ENCODE measurements at regions of chr11 and their contacts with region 1.

Region 1: GRCh38 chr11:117946842-117947526 is 17.8 kb upstream of the TMPRSS13 start:
- DNase-seq: peak; percentile 91
- H3K4me3 Mint-ChIP-seq: no peak overlapping the region
- H3K27ac Mint-ChIP-seq: no peak overlapping the region
- H3K4me1 Mint-ChIP-seq: peaks cover 68% of the 10 kb centered on the region
- H3K27me3 Mint-ChIP-seq: no peaks in the 10 kb centered on the region

Region 2: DNA sequence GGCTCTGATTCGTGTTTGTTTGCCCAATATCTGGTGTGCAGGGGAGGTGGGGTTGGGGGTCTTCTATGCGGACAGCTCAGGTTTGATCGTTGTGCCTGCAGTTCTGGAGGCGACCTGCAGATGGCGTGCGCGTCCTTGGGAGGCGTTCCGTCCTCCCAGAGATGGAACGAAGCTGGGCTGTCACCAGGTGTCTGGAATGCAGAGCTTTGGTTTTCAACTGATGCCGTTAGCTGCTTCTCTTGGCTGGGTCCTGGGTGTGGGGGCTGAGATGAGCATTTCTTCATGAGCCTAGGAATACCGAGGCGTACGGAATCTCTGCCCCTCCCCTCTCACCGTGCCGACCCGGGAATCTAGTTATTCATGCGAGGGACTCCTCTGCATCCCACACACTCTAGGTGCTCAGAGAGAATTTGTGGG is 520.7 kb before region 1 on chr11:
- CTCF ChIA-PET with region 1: interaction called, 7 read pairs
- intact Hi-C with region 1: loop called (anchors 5 kb)
- DNase-seq: peak; percentile 84
- H3K4me3 Mint-ChIP-seq: no peak overlapping the region
- H3K27ac Mint-ChIP-seq: no peak overlapping the region
- H3K4me1 Mint-ChIP-seq: no peaks in the 10 kb centered on the region
- H3K27me3 Mint-ChIP-seq: peaks cover 4% of the 10 kb centered on the region

Region 3: GRCh38 chr11:117828611-117829368 is 118.2 kb before region 1 on chr11:
- CTCF ChIA-PET with region 1: interaction called, 69 read pairs
- intact Hi-C with region 1: loop called (anchors 1 kb)
- DNase-seq: peak; percentile 92
- H3K4me3 Mint-ChIP-seq: no peak overlapping the region
- H3K27ac Mint-ChIP-seq: peak overlapping the region; percentile 46
- H3K4me1 Mint-ChIP-seq: peaks cover 50% of the 10 kb centered on the region
- H3K27me3 Mint-ChIP-seq: no peaks in the 10 kb centered on the region

Region 4: DNA sequence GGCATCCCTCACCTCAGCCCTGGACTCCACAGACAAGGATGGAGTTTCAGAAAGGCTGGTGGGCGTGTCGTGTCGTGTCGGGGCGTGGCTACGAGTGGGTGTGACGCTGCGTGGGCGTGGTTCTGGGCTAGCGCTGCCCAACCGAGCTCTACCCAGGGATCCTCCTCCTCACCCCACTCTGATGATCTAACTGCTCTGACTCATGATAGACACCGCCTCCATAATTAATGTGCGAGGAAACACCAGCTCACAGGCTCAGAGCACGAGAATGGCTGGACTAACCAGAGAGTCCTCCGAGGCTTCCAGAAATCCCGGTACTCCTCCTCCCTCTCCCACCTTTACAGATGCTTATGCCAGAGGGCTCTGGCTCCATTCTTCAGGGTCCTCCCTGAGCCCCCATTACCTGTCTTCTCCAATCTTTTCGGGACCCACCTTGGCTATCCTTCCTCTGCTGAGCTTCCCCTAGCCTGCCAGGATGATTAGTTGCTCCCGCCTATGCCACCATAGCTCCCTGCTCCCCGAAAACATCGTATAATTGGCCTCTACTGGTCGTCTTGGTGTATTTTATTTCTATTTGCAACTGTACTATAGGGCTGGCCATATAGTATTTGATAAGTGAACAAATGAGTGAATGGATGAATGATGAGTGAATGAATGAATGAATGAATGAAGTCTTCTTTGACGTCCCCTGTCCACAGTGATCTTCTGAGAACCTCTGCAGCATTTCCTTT is 39.6 kb before region 1 on chr11:
- CTCF ChIA-PET with region 1: interaction called, 11 read pairs
- intact Hi-C with region 1: loop called (anchors 2 kb)
- DNase-seq: peak; percentile 79
- H3K4me3 Mint-ChIP-seq: peak overlapping the region; percentile 57
- H3K27ac Mint-ChIP-seq: no peak overlapping the region
- H3K4me1 Mint-ChIP-seq: peaks cover 8% of the 10 kb centered on the region
- H3K27me3 Mint-ChIP-seq: no peaks in the 10 kb centered on the region

Region 5: DNA sequence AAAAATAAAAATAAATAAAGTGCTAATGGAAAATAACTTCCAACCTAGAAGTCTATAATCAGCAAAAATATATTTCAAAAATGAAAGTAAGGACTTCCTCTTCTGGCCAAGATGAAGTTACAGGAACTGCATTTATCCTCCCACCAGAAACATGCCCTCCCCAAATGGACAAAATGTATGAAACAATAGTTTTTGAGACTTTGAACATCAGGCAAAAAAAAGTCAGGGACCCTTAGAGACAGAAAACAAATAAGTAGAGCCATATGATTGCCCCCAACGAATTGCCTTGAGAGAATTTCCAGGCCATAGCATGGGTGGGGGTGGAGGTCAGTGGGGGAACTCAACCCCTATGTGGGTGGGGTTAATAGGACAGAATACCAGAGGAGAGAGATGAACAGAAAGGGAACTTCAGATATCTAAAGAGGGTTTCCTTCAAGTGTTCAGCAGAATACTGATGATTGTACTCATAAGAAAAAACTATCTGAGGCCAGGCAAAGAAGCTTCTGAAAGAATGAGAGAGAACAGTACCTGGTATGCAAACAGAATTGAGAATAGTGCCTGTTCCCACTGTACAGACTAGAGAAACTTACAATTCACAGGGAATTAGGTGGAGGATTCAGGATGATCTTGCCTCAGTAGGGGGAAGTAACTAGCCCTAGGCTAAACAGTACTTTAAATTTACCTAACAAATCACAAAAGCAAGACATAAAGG is 12.6 kb after region 1 on chr11:
- CTCF ChIA-PET with region 1: interaction called, 13 read pairs
- intact Hi-C with region 1: no loop called
- DNase-seq: no peak
- H3K4me3 Mint-ChIP-seq: no peak overlapping the region
- H3K27ac Mint-ChIP-seq: no peak overlapping the region
- H3K4me1 Mint-ChIP-seq: peaks cover 26% of the 10 kb centered on the region
- H3K27me3 Mint-ChIP-seq: no peaks in the 10 kb centered on the region

Region 6: GRCh38 chr11:117985953-117986887 is 39.2 kb after region 1 on chr11 and contains the start of gene IL10RA:
- CTCF ChIA-PET with region 1: interaction called, 32 read pairs
- intact Hi-C with region 1: loop called (anchors 1 kb)
- DNase-seq: peak; percentile 81
- H3K4me3 Mint-ChIP-seq: peak within 1 kb of the TSS; percentile 84
- H3K27ac Mint-ChIP-seq: peak within 1 kb of the TSS; percentile 88
- H3K4me1 Mint-ChIP-seq: peaks cover 63% of the 10 kb centered on the region
- H3K27me3 Mint-ChIP-seq: no peaks in the 10 kb centered on the region
- total RNA-seq, gene IL10RA: 11.3 to 16.1 TPM

Region 7: GRCh38 chr11:118051611-118052461 is 104.9 kb after region 1 on chr11:
- CTCF ChIA-PET with region 1: interaction called, 230 read pairs
- intact Hi-C with region 1: loop called (anchors 1 kb)
- DNase-seq: peak; percentile 84
- H3K4me3 Mint-ChIP-seq: no peak overlapping the region
- H3K27ac Mint-ChIP-seq: peak overlapping the region; percentile 61
- H3K4me1 Mint-ChIP-seq: peaks cover 52% of the 10 kb centered on the region
- H3K27me3 Mint-ChIP-seq: no peaks in the 10 kb centered on the region

Measured in activated naive CD4-positive, alpha-beta T cell treated with anti-CD3 and anti-CD28 coated beads for 36 hours (primary cell).